ENCODE measurements at regions of chr11 and their contacts with region 1.

Region 1: DNA sequence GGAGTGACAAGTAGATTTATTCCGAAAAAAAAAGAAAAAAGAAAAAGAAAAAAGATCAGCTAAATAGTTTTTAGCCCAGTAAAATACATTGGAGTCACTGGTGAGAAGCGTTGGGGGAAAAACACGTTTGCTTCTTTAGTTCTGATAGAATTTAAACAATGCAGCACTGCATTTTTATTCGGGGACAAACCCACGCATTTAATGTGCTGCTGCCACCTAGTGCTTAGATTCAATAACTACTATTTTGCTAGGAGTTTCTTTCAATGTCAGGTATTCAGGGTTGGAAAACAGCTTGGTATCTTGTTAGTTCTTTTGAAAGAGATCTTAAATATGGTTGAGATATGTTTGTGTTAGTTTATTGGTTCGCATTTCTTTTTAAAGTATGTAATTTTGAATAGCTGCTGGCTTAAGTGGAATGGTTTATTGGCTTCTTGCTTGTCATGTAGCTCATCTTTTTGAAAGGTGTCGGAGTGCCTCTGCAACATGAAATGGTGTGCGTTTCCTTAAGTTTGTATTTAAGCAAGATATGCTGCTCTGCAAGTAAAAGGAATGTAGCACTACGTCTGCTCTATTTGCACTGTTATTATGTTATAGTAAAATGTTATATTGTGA is 41.9 kb downstream of the SVIP start:
- DNase-seq: no peak
- H3K4me3 ChIP-seq: no peak overlapping the region
- H3K27ac ChIP-seq: no peak overlapping the region
- H3K4me1 ChIP-seq: no peaks in the 10 kb centered on the region
- H3K27me3 ChIP-seq: no peaks in the 10 kb centered on the region
- CTCF ChIP-seq: peak; percentile 10 to 59 (median 52)

Region 2: GRCh38 chr11:22244986-22245592 is 542.6 kb before region 1 on chr11:
- intact Hi-C with region 1: loop called (anchors 5 kb)
- DNase-seq: peak in 1 of 2 donors; percentile 63
- H3K4me3 ChIP-seq: no peak overlapping the region
- H3K27ac ChIP-seq: no peak overlapping the region
- H3K4me1 ChIP-seq: no peaks in the 10 kb centered on the region
- H3K27me3 ChIP-seq: no peaks in the 10 kb centered on the region
- CTCF ChIP-seq: peak in 2 of 3 experiments; percentile 47 to 55

Region 3: GRCh38 chr11:22331771-22332170 is 455.9 kb before region 1 on chr11:
- intact Hi-C with region 1: loop called (anchors 5 kb)
- DNase-seq: no peak
- H3K4me3 ChIP-seq: no peak overlapping the region
- H3K27ac ChIP-seq: no peak overlapping the region
- H3K4me1 ChIP-seq: no peaks in the 10 kb centered on the region
- H3K27me3 ChIP-seq: no peaks in the 10 kb centered on the region
- CTCF ChIP-seq: no peak

Region 4: GRCh38 chr11:22851477-22851876 is 63.8 kb after region 1 on chr11:
- intact Hi-C with region 1: no loop called
- DNase-seq: no peak
- H3K4me3 ChIP-seq: no peak overlapping the region
- H3K27ac ChIP-seq: no peak overlapping the region
- H3K4me1 ChIP-seq: no peaks in the 10 kb centered on the region
- H3K27me3 ChIP-seq: no peaks in the 10 kb centered on the region
- CTCF ChIP-seq: no peak